ENCODE measurements at regions of chr22 and their contacts with region 1.

Region 1: GRCh38 chr22:48574776-48575565 is 1252.7 kb downstream of the BRD1 start:
- DNase-seq: peak in 7 of 10 donors; percentile 31 to 83 (median 68)
- H3K4me3 ChIP-seq: peak overlapping the region in 23 of 59 donors; percentile 2 to 74 (median 33)
- H3K27ac ChIP-seq: peak overlapping the region in 51 of 59 donors; percentile 2 to 86 (median 65)
- H3K27me3 ChIP-seq: peaks cover 0 to 3% (median 0%) of the 10 kb centered on the region in 45 donors
- CTCF ChIP-seq: peak in 55 of 56 donors; percentile 21 to 84 (median 59)

Region 2: DNA sequence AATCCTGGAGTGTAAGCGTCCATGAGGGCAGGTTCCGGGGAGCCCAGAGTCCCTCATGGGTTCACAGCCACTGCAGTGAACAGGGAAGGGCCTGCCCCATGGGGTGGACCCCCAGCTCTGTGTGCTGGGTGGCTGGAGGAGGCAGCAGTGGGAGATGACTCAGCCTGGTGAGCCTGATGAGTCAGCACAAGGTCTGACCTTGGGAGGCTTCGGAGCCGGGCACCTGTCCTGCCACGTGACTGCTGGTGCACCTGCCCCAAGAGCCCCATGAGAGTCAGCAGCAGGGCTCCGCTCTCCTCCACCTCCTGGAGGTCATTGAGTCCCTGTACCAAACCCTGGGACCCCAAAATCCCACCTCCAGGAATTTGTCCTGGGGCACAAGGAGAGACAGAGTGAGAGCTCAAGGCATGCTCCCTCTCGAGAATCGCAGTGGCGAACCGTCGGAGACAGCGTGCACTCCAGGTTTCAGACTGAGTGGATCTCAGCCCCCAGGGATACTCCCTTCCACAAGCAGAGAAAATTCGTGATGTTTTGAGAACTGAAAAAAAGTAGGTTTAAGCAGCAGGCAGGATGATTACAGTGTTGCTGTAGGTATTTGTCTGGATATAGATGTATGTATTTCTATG is 31.0 kb after region 1 on chr22:
- intact Hi-C with region 1: no loop called
- DNase-seq: peak in 1 of 10 donors; percentile 54
- H3K4me3 ChIP-seq: no peak overlapping the region
- H3K27ac ChIP-seq: peak overlapping the region in 24 of 59 donors; percentile 0 to 69 (median 36)
- H3K27me3 ChIP-seq: no peaks in the 10 kb centered on the region
- CTCF ChIP-seq: no peak

Region 3: GRCh38 chr22:48629631-48630432 is 54.9 kb after region 1 on chr22:
- intact Hi-C with region 1: loop called (anchors 2 to 5 kb)
- DNase-seq: peak in 9 of 10 donors; percentile 60 to 86 (median 80)
- H3K4me3 ChIP-seq: peak overlapping the region in 7 of 59 donors; percentile 7 to 51 (median 30)
- H3K27ac ChIP-seq: peak overlapping the region in 58 of 59 donors; percentile 50 to 99 (median 92)
- H3K27me3 ChIP-seq: no peaks in the 10 kb centered on the region
- CTCF ChIP-seq: no peak

Region 4: GRCh38 chr22:48866906-48867681 is 292.1 kb after region 1 on chr22:
- intact Hi-C with region 1: loop called in 1 of 2 experiments (anchors 5 kb)
- DNase-seq: peak in 5 of 10 donors; percentile 27 to 48 (median 40)
- H3K4me3 ChIP-seq: peak overlapping the region in 6 of 59 donors; percentile 6 to 36 (median 20)
- H3K27ac ChIP-seq: peak overlapping the region in 19 of 59 donors; percentile 1 to 63 (median 35)
- H3K27me3 ChIP-seq: peaks cover 0 to 2% (median 0%) of the 10 kb centered on the region in 45 donors
- CTCF ChIP-seq: no peak

Region 5: DNA sequence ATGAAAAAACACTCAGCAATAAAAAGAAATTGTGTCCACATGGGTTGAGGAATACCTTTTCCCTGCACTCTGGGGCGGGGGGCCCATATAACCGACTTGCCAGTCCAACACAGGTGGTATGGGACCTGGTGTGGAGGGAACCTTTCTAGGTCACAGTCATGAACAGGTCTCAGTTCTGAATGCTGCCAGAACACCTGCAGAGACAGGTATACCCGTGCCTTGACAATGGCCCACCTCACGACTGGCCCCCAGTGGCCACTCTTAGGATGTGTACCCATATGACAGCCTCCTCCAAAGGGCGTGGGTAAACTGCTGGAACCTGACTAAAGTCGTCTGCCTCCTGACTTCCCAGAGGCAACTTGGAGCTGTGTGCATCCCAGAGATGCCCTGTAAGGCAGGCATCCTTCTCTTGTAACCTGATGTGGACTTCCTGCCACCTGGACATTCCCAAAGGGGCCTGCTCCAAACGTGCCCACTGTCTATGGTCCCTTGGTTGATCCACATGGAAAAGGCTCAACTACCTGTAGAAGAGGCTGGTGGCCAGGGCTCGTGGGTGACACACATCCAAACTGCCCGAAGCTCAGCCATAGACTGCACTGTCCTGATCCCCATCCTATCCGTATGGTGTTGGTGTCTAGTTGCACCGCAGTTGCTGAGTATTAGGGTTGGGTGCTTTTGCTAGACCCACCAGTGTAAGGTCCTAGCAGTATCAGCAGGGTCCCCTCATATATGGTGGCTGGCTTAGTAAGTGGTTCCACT is 393.4 kb after region 1 on chr22:
- intact Hi-C with region 1: loop called in 1 of 2 experiments (anchors 5 kb)
- DNase-seq: peak in 4 of 10 donors; percentile 22 to 41 (median 27)
- H3K4me3 ChIP-seq: no peak overlapping the region
- H3K27ac ChIP-seq: no peak overlapping the region
- H3K27me3 ChIP-seq: peaks cover 0 to 7% (median 0%) of the 10 kb centered on the region in 45 donors
- CTCF ChIP-seq: peak in 49 of 56 donors; percentile 10 to 75 (median 42)

Region 6: GRCh38 chr22:49046546-49047361 is 471.8 kb after region 1 on chr22:
- intact Hi-C with region 1: loop called (anchors 5 to 10 kb)
- DNase-seq: peak in 9 of 10 donors; percentile 38 to 73 (median 62)
- H3K4me3 ChIP-seq: no peak overlapping the region
- H3K27ac ChIP-seq: peak overlapping the region in 6 of 59 donors; percentile 11 to 51 (median 36)
- H3K27me3 ChIP-seq: peaks cover 0 to 23% (median 0%) of the 10 kb centered on the region in 45 donors
- CTCF ChIP-seq: peak in 54 of 56 donors; percentile 12 to 74 (median 62)

Region 7: GRCh38 chr22:49632199-49633009 is 1057.4 kb after region 1 on chr22:
- intact Hi-C with region 1: loop called (anchors 2 to 10 kb)
- DNase-seq: peak; percentile 57 to 86 (median 68)
- H3K4me3 ChIP-seq: peak overlapping the region; percentile 31 to 75 (median 58)
- H3K27ac ChIP-seq: peak overlapping the region in 42 of 59 donors; percentile 4 to 88 (median 49)
- H3K27me3 ChIP-seq: no peaks in the 10 kb centered on the region
- CTCF ChIP-seq: peak; percentile 72 to 99 (median 93)